IMR-90 (cell line): ENCODE measurements at regions of chr4 and their contacts with region 1.

Region 1: GRCh38 chr4:125314676-125315575 is at the start of gene FAT4:
- DNase-seq: peak; percentile 97
- ATAC-seq: peak; percentile 91
- H3K4me3 ChIP-seq: peak within 1 kb of the TSS; percentile 57
- H3K27ac ChIP-seq: peak within 1 kb of the TSS; percentile 85
- H3K4me1 ChIP-seq: peaks cover 11% of the 10 kb centered on the region
- H3K27me3 ChIP-seq: no peaks in the 10 kb centered on the region
- CTCF ChIP-seq: no peak
- POLR2A ChIP-seq: no peak; the same call in 1 of the 2 replicates
- RAD21 ChIP-seq: no peak
- total RNA-seq, gene FAT4: 35.6 and 37.5 TPM in 2 replicates

Region 2: DNA sequence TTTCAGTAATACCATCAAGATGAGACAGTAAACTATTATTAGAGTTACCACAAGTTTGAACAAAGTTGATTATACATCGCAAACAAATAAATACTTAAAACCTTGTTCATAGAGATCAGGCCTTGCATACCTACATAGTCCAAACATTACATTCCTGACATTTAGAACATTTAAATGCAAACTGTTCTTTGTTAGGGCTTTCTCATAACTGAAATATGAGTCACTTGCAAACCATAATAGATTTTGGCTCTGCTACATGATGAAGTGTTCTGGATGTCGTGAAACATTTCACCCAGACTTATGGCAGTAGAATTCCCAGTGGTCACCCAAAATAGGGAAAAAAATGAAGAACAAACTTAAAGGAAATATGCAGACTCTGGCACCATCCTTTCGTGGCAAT is 74.8 kb after region 1 on chr4:
- CTCF ChIA-PET with region 1: no interaction called
- POLR2A ChIA-PET with region 1: no interaction called
- dilution Hi-C with region 1: no loop called
- in situ Hi-C with region 1: no loop called
- intact Hi-C with region 1: loop called (anchors 1 kb)
- DNase-seq: peak; percentile 96
- ATAC-seq: peak; percentile 89
- H3K4me3 ChIP-seq: no peak overlapping the region
- H3K27ac ChIP-seq: peak overlapping the region; percentile 96; the same call in 1 of the 2 replicates
- H3K4me1 ChIP-seq: peaks cover 4% of the 10 kb centered on the region
- H3K27me3 ChIP-seq: no peaks in the 10 kb centered on the region
- CTCF ChIP-seq: no peak
- POLR2A ChIP-seq: no peak
- RAD21 ChIP-seq: no peak

Region 3: GRCh38 chr4:125650557-125650956 is 335.6 kb after region 1 on chr4:
- CTCF ChIA-PET with region 1: interaction called, 11 read pairs
- POLR2A ChIA-PET with region 1: no interaction called
- dilution Hi-C with region 1: no loop called
- in situ Hi-C with region 1: no loop called
- intact Hi-C with region 1: no loop called
- DNase-seq: peak; percentile 35
- ATAC-seq: peak; percentile 60
- H3K4me3 ChIP-seq: no peak overlapping the region
- H3K27ac ChIP-seq: no peak overlapping the region
- H3K4me1 ChIP-seq: no peaks in the 10 kb centered on the region
- H3K27me3 ChIP-seq: no peaks in the 10 kb centered on the region
- CTCF ChIP-seq: no peak
- POLR2A ChIP-seq: no peak
- RAD21 ChIP-seq: no peak

Region 4: GRCh38 chr4:125750828-125751466 is 436.0 kb after region 1 on chr4:
- CTCF ChIA-PET with region 1: interaction called, 9 read pairs
- POLR2A ChIA-PET with region 1: no interaction called
- dilution Hi-C with region 1: no loop called
- in situ Hi-C with region 1: no loop called
- intact Hi-C with region 1: loop called (anchors 1 kb)
- DNase-seq: peak; percentile 54
- ATAC-seq: peak; percentile 71
- H3K4me3 ChIP-seq: no peak overlapping the region
- H3K27ac ChIP-seq: no peak overlapping the region
- H3K4me1 ChIP-seq: no peaks in the 10 kb centered on the region
- H3K27me3 ChIP-seq: no peaks in the 10 kb centered on the region
- CTCF ChIP-seq: peak; percentile 48
- POLR2A ChIP-seq: no peak
- RAD21 ChIP-seq: peak; percentile 59

Region 5: GRCh38 chr4:126051689-126052424 is 736.9 kb after region 1 on chr4:
- CTCF ChIA-PET with region 1: no interaction called
- POLR2A ChIA-PET with region 1: no interaction called
- dilution Hi-C with region 1: no loop called
- in situ Hi-C with region 1: no loop called
- intact Hi-C with region 1: loop called (anchors 5 kb)
- DNase-seq: peak; percentile 84
- ATAC-seq: peak; percentile 92
- H3K4me3 ChIP-seq: no peak overlapping the region
- H3K27ac ChIP-seq: peak overlapping the region; percentile 43; the same call in 1 of the 2 replicates
- H3K4me1 ChIP-seq: 0 out of 2 replicates have a peak, but pooled peaks cover 2% of the 10 kb centered on the region
- H3K27me3 ChIP-seq: no peaks in the 10 kb centered on the region
- CTCF ChIP-seq: peak; percentile 33
- POLR2A ChIP-seq: no peak
- RAD21 ChIP-seq: peak; percentile 35

Region 6: DNA sequence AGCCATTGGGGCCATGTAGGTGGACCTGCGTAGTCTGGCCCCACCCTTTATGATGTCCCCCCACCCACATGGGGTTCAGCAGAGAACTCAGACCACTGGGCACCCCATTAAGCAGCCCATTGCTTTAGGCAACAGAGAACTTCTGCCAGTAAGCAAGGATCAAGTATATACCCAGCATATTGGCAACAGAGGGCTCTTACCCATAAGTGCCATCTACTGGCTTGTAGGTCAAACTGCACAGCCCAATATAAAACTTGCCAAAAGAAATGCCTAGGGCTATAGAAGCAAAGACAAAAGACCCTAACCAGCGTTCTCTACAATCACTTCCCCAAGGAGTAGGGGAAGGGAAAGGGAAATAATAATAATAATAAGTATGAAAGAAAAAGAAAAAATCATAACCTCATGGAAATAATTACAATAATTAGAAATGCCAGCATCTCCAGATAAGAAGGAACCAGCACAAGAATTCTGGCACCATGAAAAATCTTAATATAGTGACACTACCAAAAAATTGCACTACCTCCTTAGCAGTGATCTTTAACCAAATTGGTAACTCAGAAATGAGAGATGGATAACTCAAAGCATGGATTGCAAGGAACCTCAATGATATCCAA is 1090.5 kb after region 1 on chr4:
- CTCF ChIA-PET with region 1: no interaction called
- POLR2A ChIA-PET with region 1: no interaction called
- dilution Hi-C with region 1: no loop called
- in situ Hi-C with region 1: loop called (anchors 25 kb)
- intact Hi-C with region 1: loop called (anchors 5 kb)
- DNase-seq: peak; percentile 39
- ATAC-seq: peak; percentile 54; the same call in 1 of the 2 replicates
- H3K4me3 ChIP-seq: no peak overlapping the region
- H3K27ac ChIP-seq: no peak overlapping the region
- H3K4me1 ChIP-seq: peaks cover 4% of the 10 kb centered on the region; the same call in 1 of the 2 replicates
- H3K27me3 ChIP-seq: no peaks in the 10 kb centered on the region
- CTCF ChIP-seq: peak; percentile 38
- POLR2A ChIP-seq: no peak
- RAD21 ChIP-seq: peak; percentile 51